Common myeloid progenitor, CD34-positive (primary cell): ENCODE measurements at regions of chr1 and their contacts with region 1.

Region 1: GRCh38 chr1:22416555-22417454 is 34.8 kb upstream of the ZBTB40 start:
- DNase-seq: peak; percentile 71 to 84 (median 78)
- H3K4me3 ChIP-seq: no peak overlapping the region
- H3K27ac ChIP-seq: no peak overlapping the region
- H3K4me1 ChIP-seq: peaks cover 0 to 4% (median 1%) of the 10 kb centered on the region in 4 experiments
- H3K27me3 ChIP-seq: peaks cover 0 to 48% (median 8%) of the 10 kb centered on the region in 5 experiments

Region 2: DNA sequence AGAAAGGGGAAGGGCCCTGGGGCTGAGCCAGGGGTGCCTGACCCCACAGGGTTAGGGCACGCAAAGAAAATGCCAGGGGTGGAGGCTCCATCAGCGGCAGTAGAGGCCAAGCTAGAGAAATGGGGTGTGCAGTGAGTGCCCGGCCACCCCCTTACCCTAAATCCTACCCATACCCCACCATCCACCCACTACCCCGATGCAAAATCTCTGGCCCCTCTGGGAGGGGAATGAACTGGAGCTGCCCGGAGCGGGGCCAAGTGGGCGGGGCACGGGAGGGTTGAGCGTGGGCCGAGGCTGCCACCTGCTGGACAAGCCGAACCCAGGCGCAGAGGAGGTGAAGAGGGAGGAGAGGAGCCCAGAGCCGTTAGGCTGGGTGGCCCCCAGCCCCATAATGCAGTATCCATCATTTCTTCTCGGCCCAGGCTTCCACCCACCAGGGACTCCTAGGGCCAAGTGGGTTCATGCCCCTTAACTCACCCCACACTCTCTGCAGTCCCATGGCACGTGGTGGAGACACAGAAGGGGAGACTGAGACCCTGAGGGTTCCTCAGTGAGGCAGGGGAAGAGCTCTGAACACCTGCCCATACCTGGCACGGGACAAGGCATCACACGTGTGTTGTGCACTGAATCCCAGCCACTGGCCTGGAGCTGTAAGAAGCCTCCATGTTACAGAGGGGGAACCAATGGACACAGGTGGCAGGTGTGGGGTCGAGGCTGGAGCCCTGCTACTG is 225.3 kb after region 1 on chr1:
- CTCF ChIA-PET with region 1: interaction called, 40 read pairs
- POLR2A ChIA-PET with region 1: no interaction called
- DNase-seq: peak; percentile 50 to 69 (median 62)
- H3K4me3 ChIP-seq: no peak overlapping the region
- H3K27ac ChIP-seq: no peak overlapping the region
- H3K4me1 ChIP-seq: no peaks in the 10 kb centered on the region
- H3K27me3 ChIP-seq: peaks cover 0 to 28% (median 6%) of the 10 kb centered on the region in 5 experiments